ENCODE measurements at regions of chr7 and their contacts with region 1.

Region 1: GRCh38 chr7:55255496-55256435 is 109.4 kb upstream of the LANCL2 start:
- DNase-seq: peak; percentile 93
- H3K4me3 ChIP-seq: peak overlapping the region; percentile 56 to 67
- H3K27ac ChIP-seq: peak overlapping the region; percentile 50 to 58; a peak in 3 of 4 replicates
- H3K4me1 ChIP-seq: peaks cover 0 to 15% of the 10 kb centered on the region in 2 experiments; a peak in 1 of 4 replicates
- H3K27me3 ChIP-seq: no peaks in the 10 kb centered on the region
- CTCF ChIP-seq: peak; percentile 99
- EP300 ChIP-seq: no peak
- RAD21 ChIP-seq: peak; percentile 99

Region 2: DNA sequence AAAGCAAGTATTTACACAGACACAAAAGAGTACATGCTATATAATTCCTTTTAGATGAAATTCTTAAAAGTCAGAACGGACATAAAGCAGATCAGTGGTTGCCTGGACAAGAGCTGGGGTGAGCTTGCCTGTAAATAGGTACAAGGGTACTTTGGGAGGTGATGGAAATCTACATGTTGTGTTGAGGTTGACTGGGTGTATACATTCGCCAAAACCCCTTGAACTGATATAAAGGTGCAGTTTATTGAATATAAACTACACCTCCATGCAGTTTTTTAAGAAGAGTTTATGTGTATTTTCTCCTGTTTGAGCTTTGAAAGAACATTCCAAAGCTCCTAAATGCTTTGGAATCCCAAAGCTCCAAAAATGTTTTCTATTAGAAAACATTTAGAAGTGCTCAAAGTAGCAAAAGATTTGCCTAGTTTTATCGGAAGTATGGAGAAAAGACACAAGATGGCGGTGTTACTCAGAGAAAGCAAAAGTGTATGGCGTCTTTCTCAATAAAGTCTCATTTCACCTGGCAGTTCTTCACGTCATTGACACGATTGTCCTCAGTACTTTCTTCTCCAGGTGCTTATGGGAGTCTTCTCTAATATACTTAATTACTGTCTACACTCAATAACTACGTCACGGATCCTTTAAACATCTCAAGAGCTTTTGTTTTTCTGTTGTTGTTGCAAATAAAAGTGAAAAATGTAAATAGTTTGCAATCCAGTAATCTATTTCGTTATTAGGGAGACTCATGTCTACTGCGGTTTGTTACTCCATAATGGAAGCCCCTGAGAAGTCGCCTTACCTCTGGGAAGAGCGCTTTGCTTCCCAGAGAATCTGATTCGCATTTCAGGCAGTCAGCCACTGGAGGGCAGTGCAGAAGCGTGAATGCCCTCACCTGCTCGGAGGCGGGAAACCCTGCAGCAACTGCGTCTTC is 482.0 kb before region 1 on chr7:
- CTCF ChIA-PET with region 1: interaction called, 1,068 read pairs
- POLR2A ChIA-PET with region 1: interaction called, 3 read pairs
- DNase-seq: peak; percentile 80
- H3K4me3 ChIP-seq: peak overlapping the region; percentile 53 to 57
- H3K27ac ChIP-seq: peak overlapping the region; percentile 41 to 49; a peak in 2 of 4 replicates
- H3K4me1 ChIP-seq: 0 out of 4 replicates have a peak, but pooled peaks cover 0 to 6% of the 10 kb centered on the region in 2 experiments
- H3K27me3 ChIP-seq: no peaks in the 10 kb centered on the region
- CTCF ChIP-seq: peak; percentile 99
- EP300 ChIP-seq: no peak
- RAD21 ChIP-seq: peak; percentile 99

Region 3: GRCh38 chr7:54888067-54888733 is 367.6 kb before region 1 on chr7:
- CTCF ChIA-PET with region 1: interaction called, 30 read pairs
- POLR2A ChIA-PET with region 1: no interaction called
- DNase-seq: peak; percentile 73
- H3K4me3 ChIP-seq: peak overlapping the region; percentile 36 to 52; a peak in 3 of 4 replicates
- H3K27ac ChIP-seq: no peak overlapping the region
- H3K4me1 ChIP-seq: peaks cover 0 to 10% of the 10 kb centered on the region in 2 experiments; a peak in 2 of 4 replicates
- H3K27me3 ChIP-seq: no peaks in the 10 kb centered on the region
- CTCF ChIP-seq: no peak
- EP300 ChIP-seq: no peak
- RAD21 ChIP-seq: no peak

Region 4: GRCh38 chr7:55005241-55005851 is 250.4 kb before region 1 on chr7:
- CTCF ChIA-PET with region 1: interaction called, 15 read pairs
- POLR2A ChIA-PET with region 1: no interaction called
- DNase-seq: no peak
- H3K4me3 ChIP-seq: no peak overlapping the region
- H3K27ac ChIP-seq: no peak overlapping the region
- H3K4me1 ChIP-seq: peaks cover 0 to 2% of the 10 kb centered on the region in 2 experiments; a peak in 1 of 4 replicates
- H3K27me3 ChIP-seq: no peaks in the 10 kb centered on the region
- CTCF ChIP-seq: no peak
- EP300 ChIP-seq: no peak
- RAD21 ChIP-seq: no peak

Region 5: DNA sequence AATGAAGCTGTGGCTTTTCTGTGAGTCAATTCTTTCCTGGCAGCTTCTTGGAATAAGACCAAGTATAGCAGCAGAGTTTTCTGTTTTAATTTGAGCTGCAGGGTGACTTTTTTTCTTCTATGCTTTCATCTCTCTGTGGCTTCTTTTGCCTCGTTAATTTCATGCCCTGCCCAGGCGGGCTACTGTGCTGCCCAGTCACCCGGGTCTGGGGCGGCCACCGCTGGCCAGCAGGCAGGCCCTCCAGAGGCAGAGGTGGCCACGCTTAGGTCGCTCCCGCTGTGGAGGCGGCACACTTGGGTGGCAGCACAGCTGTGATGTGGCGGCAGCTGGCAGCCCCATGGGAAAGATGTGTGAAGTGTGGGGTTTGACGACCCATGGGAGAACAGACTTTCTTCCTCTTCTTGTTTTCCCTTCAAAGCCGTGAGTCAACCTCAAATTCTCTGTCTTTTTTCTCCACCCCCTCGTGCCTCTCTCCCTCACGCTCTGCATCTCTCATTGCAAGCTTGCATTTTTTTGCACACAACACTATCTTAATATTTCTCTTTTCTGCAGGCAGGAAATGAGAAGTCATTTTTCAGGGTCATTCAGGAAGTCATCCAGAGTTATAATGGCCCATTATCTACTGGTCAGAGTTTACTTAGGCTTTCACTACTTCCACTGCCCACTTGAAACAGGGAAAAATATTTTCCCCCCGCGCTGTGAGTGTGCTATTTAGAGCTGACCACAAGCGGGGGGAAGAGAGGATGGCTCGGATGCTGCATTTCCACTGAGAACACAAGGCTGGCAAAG is 169.2 kb before region 1 on chr7:
- CTCF ChIA-PET with region 1: interaction called, 35 read pairs
- POLR2A ChIA-PET with region 1: no interaction called
- DNase-seq: peak; percentile 57
- H3K4me3 ChIP-seq: peak overlapping the region; percentile 44 to 62
- H3K27ac ChIP-seq: peak overlapping the region; percentile 91 to 99
- H3K4me1 ChIP-seq: peaks cover 43 to 56% of the 10 kb centered on the region in 2 experiments
- H3K27me3 ChIP-seq: no peaks in the 10 kb centered on the region
- CTCF ChIP-seq: no peak; the same call in none of the 2 replicates
- EP300 ChIP-seq: peak; percentile 51 to 82; a peak in 3 of 4 replicates
- RAD21 ChIP-seq: no peak

Region 6: GRCh38 chr7:55171155-55171554 is 84.6 kb before region 1 on chr7:
- CTCF ChIA-PET with region 1: interaction called, 23 read pairs
- POLR2A ChIA-PET with region 1: no interaction called
- DNase-seq: no peak
- H3K4me3 ChIP-seq: no peak overlapping the region
- H3K27ac ChIP-seq: no peak overlapping the region
- H3K4me1 ChIP-seq: no peaks in the 10 kb centered on the region; a peak in 1 of 4 replicates
- H3K27me3 ChIP-seq: no peaks in the 10 kb centered on the region
- CTCF ChIP-seq: no peak
- EP300 ChIP-seq: no peak
- RAD21 ChIP-seq: no peak

Region 7: GRCh38 chr7:55245271-55245723 is 10.5 kb before region 1 on chr7:
- CTCF ChIA-PET with region 1: interaction called, 104 read pairs
- POLR2A ChIA-PET with region 1: no interaction called
- DNase-seq: no peak
- H3K4me3 ChIP-seq: no peak overlapping the region
- H3K27ac ChIP-seq: peak overlapping the region in 1 of 2 experiments; percentile 53; a peak in 3 of 4 replicates
- H3K4me1 ChIP-seq: peaks cover 14 to 15% of the 10 kb centered on the region in 2 experiments
- H3K27me3 ChIP-seq: no peaks in the 10 kb centered on the region
- CTCF ChIP-seq: no peak
- EP300 ChIP-seq: peak in 1 of 2 experiments; percentile 41; a peak in 1 of 4 replicates
- RAD21 ChIP-seq: no peak

Measured in SK-N-SH (cell line).